ENCODE measurements at regions of chr4 and their contacts with region 1.

Region 1: DNA sequence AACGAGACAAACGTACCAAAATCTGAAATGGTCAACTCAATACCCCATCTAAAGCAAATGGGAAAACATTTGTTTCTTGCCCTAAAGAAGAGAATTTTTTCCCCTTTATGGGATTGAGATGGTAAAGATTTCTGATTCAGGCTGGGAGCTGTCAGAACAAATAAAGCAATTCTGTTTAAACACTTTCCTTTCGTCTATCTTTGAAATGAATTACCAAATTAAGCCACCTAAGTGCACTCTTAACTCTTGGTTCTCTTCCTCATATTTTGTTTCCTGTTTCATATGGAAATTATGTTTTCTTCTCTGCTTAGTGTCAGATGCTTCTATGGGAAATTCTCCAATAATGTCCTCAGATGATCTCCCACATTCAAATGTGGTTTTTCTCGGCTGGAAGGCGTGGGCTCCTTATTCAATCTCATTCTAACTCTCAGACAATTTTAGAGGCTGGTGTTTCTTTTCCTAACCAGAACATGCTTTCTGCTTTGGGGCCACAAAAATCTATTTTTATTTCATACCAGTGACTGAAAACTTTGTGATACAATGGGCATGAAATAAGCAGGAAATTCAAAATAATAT is 50.3 kb upstream of the HPF1 start:
- DNase-seq: no peak
- H3K4me3 ChIP-seq: no peak overlapping the region
- H3K27ac ChIP-seq: no peak overlapping the region
- H3K4me1 ChIP-seq: no peaks in the 10 kb centered on the region
- H3K27me3 ChIP-seq: no peaks in the 10 kb centered on the region
- CTCF ChIP-seq: no peak
- EP300 ChIP-seq: no peak
- POLR2A ChIP-seq: no peak

Region 2: GRCh38 chr4:169963998-169964397 is 156.0 kb after region 1 on chr4:
- intact Hi-C with region 1: no loop called
- DNase-seq: no peak
- H3K4me3 ChIP-seq: no peak overlapping the region
- H3K27ac ChIP-seq: no peak overlapping the region
- H3K4me1 ChIP-seq: no peaks in the 10 kb centered on the region
- H3K27me3 ChIP-seq: no peaks in the 10 kb centered on the region
- CTCF ChIP-seq: no peak
- EP300 ChIP-seq: no peak
- POLR2A ChIP-seq: no peak

Region 3: GRCh38 chr4:169993531-169993930 is 185.5 kb after region 1 on chr4:
- intact Hi-C with region 1: no loop called
- DNase-seq: no peak
- H3K4me3 ChIP-seq: no peak overlapping the region
- H3K27ac ChIP-seq: peak overlapping the region in 1 of 4 donors; percentile 9
- H3K4me1 ChIP-seq: no peaks in the 10 kb centered on the region
- H3K27me3 ChIP-seq: no peaks in the 10 kb centered on the region
- CTCF ChIP-seq: no peak
- EP300 ChIP-seq: no peak
- POLR2A ChIP-seq: no peak

Region 4: GRCh38 chr4:170047771-170048354 is 239.8 kb after region 1 on chr4:
- intact Hi-C with region 1: loop called (anchors 2 kb)
- DNase-seq: no peak
- H3K4me3 ChIP-seq: no peak overlapping the region
- H3K27ac ChIP-seq: no peak overlapping the region
- H3K4me1 ChIP-seq: no peaks in the 10 kb centered on the region
- H3K27me3 ChIP-seq: no peaks in the 10 kb centered on the region
- CTCF ChIP-seq: peak; percentile 69 to 84 (median 75)
- EP300 ChIP-seq: no peak
- POLR2A ChIP-seq: no peak